Heart right ventricle (tissue), 16 donors: ENCODE measurements at regions of chr3 and their contacts with region 1.

Region 1: GRCh38 chr3:143329567-143330211 is 210.1 kb downstream of the CHST2 start:
- DNase-seq: peak in 1 of 2 donors; percentile 12
- ATAC-seq: peak in 7 of 8 donors; percentile 50 to 78 (median 73)
- H3K4me3 ChIP-seq: peak overlapping the region in 1 of 10 donors; percentile 6
- H3K27ac ChIP-seq: no peak overlapping the region
- H3K4me1 ChIP-seq: peaks cover 0 to 51% (median 23%) of the 10 kb centered on the region in 9 donors
- H3K27me3 ChIP-seq: no peaks in the 10 kb centered on the region
- CTCF ChIP-seq: no peak

Region 2: GRCh38 chr3:143135150-143135549 is 194.5 kb before region 1 on chr3:
- intact Hi-C with region 1: loop called in 2 of 10 experiments (anchors 10 kb)
- DNase-seq: no peak
- ATAC-seq: peak in 5 of 8 donors; percentile 25 to 57 (median 39)
- H3K4me3 ChIP-seq: no peak overlapping the region
- H3K27ac ChIP-seq: peak overlapping the region in 1 of 10 donors; percentile 18
- H3K4me1 ChIP-seq: peaks cover 0 to 31% (median 9%) of the 10 kb centered on the region in 9 donors
- H3K27me3 ChIP-seq: peaks cover 0 to 14% (median 0%) of the 10 kb centered on the region in 7 donors
- CTCF ChIP-seq: peak in 1 of 9 donors; percentile 24

Region 3: GRCh38 chr3:143644370-143645089 is 314.8 kb after region 1 on chr3:
- intact Hi-C with region 1: loop called in 1 of 10 experiments (anchors 10 kb)
- DNase-seq: peak in 1 of 2 donors; percentile 41
- ATAC-seq: peak in 5 of 8 donors; percentile 59 to 91 (median 64)
- H3K4me3 ChIP-seq: no peak overlapping the region
- H3K27ac ChIP-seq: no peak overlapping the region
- H3K4me1 ChIP-seq: peaks cover 0 to 7% (median 0%) of the 10 kb centered on the region in 9 donors
- H3K27me3 ChIP-seq: no peaks in the 10 kb centered on the region
- CTCF ChIP-seq: peak; percentile 28 to 71 (median 60)